Posterior vena cava (tissue), 2 donors: ENCODE measurements at regions of chr20 and their contacts with region 1.

Region 1: GRCh38 chr20:63529861-63530788 is 7.1 kb downstream of the PTK6 start:
- DNase-seq: no peak

Region 2: DNA sequence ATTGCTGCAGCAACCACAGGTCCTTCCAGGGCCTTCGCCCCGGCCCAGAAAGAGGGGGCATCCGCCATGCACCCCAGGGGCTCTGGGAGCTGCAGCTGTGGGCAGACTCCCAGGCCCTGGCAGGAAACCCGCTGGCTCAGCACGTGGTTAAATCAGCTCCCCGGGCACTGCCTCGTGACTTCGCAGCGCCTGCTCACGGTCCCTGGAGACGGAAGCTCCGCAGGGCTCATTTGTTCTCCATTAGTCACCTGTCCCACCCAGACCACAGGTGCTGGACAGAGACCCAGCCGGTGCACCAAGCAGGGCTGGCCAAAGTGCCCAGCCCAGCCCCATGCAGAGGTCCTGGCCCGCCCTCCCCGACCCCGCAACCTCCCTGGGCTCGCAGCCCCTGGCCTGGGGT is 72.4 kb before region 1 on chr20:
- intact Hi-C with region 1: no loop called
- DNase-seq: no peak

Region 3: GRCh38 chr20:63558804-63559484 is 28.8 kb after region 1 on chr20:
- intact Hi-C with region 1: loop called in 1 of 2 experiments (anchors 1 kb)
- DNase-seq: no peak

Region 4: GRCh38 chr20:63568986-63569949 is 39.1 kb after region 1 on chr20:
- intact Hi-C with region 1: no loop called
- DNase-seq: no peak